ENCODE measurements at regions of chr2 and their contacts with region 1.

Region 1: DNA sequence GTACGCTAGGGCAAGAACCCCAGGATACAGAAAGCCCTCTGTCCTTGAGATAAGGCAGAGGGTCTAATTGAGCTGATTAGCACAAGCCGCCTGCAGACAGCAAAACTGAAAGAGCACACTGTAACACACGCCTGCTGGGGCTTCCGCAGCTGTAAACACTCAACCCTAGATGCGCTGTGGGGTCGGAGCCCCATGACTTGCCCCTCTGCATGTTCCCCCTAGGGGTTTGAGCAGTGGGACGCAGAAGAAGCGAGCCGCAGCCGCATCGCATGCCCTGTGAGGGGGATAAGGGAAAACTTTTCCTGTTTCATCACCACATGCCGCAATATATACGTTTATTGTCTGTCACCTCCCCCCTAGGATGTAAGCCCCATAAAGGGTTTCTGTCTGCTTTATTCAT is 384.6 kb downstream of the PLCL1 start:
- DNase-seq: no peak
- H3K4me3 ChIP-seq: no peak overlapping the region
- H3K27ac ChIP-seq: no peak overlapping the region
- H3K4me1 ChIP-seq: no peaks in the 10 kb centered on the region
- H3K27me3 ChIP-seq: no peaks in the 10 kb centered on the region
- CTCF ChIP-seq: no peak
- POLR2A ChIP-seq: no peak

Region 2: DNA sequence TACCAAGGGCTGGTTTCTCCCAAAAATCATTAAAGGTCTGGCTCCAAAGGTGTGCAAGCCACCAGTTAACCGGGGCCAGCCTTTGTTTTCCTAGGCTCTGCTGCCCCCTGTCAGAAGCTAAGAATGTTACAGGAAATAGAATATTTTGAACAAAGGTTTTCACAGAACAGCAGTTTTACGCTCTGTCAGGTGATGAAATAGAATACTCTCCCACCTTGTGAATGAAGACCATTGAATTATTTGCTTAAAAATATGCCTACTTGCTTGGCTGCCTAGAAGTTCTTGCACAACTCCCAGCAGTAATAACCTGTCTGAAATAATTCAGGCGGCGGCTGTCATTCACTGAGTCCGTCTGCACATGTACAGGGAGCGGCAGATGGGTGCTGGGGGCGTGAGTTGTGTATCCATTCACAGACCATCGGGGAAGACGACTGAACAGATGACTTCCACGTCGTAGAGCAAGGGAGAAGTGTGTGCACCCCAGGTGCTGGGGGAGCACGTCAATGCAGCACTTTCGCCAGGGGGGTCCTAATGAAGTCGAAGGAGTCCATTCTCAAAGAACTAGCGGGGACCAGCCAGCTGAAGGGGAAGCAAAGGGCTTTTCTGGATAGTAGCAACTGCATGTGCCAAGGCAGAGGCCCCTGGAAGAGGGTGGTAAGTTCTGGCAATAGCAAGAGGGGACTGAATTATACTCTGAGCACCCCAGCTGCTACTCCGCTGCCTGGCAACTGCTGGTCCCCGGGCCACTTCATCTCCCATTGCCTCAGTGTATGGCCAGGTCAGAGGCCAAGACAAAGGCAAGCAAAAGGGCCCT is 810.3 kb before region 1 on chr2:
- intact Hi-C with region 1: no loop called
- DNase-seq: no peak
- H3K4me3 ChIP-seq: no peak overlapping the region
- H3K27ac ChIP-seq: no peak overlapping the region
- H3K4me1 ChIP-seq: peaks cover 6% of the 10 kb centered on the region
- H3K27me3 ChIP-seq: no peaks in the 10 kb centered on the region
- CTCF ChIP-seq: peak; percentile 30 to 71 (median 65)
- POLR2A ChIP-seq: no peak

Region 3: DNA sequence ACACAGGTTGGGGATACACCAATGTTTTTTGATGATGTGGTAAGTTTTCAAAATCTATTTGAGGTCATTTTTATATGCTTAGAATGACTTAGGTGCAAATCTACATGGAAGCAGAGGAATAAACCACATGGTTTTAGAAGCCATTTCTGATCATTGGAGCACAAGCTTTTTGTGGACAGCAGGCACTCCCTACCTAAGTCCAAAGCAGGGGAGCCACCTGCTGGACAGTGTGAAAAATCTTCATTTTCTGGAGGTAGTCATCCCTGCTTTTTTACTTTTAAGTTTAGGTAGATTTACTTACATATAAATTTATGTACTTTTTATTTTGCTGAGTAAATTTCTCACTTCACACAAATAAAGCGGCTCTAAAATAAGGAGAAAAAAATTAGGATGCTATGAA is 61.4 kb before region 1 on chr2:
- intact Hi-C with region 1: no loop called
- DNase-seq: no peak
- H3K4me3 ChIP-seq: no peak overlapping the region
- H3K27ac ChIP-seq: no peak overlapping the region
- H3K4me1 ChIP-seq: no peaks in the 10 kb centered on the region
- H3K27me3 ChIP-seq: no peaks in the 10 kb centered on the region
- CTCF ChIP-seq: peak in 2 of 3 experiments; percentile 35 to 59
- POLR2A ChIP-seq: no peak

Region 4: GRCh38 chr2:198162276-198162675 is 26.7 kb before region 1 on chr2:
- intact Hi-C with region 1: no loop called
- DNase-seq: no peak
- H3K4me3 ChIP-seq: no peak overlapping the region
- H3K27ac ChIP-seq: no peak overlapping the region
- H3K4me1 ChIP-seq: no peaks in the 10 kb centered on the region
- H3K27me3 ChIP-seq: no peaks in the 10 kb centered on the region
- CTCF ChIP-seq: no peak
- POLR2A ChIP-seq: no peak

Region 5: GRCh38 chr2:198238429-198238828 is 49.4 kb after region 1 on chr2:
- intact Hi-C with region 1: loop called (anchors 2 kb)
- DNase-seq: no peak
- H3K4me3 ChIP-seq: no peak overlapping the region
- H3K27ac ChIP-seq: no peak overlapping the region
- H3K4me1 ChIP-seq: no peaks in the 10 kb centered on the region
- H3K27me3 ChIP-seq: no peaks in the 10 kb centered on the region
- CTCF ChIP-seq: no peak
- POLR2A ChIP-seq: no peak

Measured in vagina (tissue), 2 donors.